Heart left ventricle (tissue), 16 donors: ENCODE measurements at regions of chr6 and their contacts with region 1.

Region 1: DNA sequence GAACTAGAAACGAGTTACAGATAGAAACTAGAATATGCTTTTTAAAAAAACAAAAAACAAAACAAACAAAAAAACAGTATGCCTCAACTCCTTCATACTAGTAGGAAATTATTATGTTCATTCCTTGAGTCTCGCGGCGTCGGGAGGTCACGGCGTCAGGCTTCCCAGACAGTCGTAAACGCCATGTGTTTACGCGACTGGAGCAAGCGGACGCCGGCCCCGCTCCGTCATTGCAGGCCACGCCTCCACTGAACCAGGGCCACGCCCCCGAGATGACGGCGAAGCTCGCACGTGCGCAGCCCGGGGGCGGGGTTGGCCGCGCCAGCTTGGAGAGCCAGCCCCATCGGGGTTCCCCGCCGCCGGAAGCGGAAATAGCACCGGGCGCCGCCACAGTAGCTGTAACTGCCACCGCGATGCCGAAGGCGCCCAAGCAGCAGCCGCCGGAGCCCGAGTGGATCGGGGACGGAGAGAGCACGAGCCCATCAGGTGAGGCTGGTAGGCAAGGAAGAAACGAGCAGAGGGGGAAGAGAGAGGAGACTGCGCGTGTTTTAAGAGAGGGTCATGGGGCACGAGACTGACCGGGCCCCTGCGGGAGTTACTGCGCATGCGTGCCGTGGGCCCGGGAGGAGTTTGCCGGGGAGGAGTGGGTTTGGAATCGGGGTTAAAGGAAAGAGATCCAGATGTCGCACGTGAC is at the start of gene ABCF1:
- DNase-seq: peak; percentile 98 to 100 (median 98)
- ATAC-seq: peak; percentile 98 to 99 (median 99)
- H3K4me3 ChIP-seq: peak within 1 kb of the TSS; percentile 43 to 95 (median 73)
- H3K27ac ChIP-seq: peak within 1 kb of the TSS; percentile 59 to 97 (median 88)
- H3K4me1 ChIP-seq: peaks cover 0 to 40% (median 28%) of the 10 kb centered on the region in 12 donors
- H3K27me3 ChIP-seq: no peaks in the 10 kb centered on the region
- CTCF ChIP-seq: peak in 1 of 12 donors; percentile 19
- POLR2A ChIP-seq: peak in 1 of 2 donors; percentile 83
- total RNA-seq, gene ABCF1: 35.1 to 49.0 (median 39.8) TPM

Region 2: GRCh38 chr6:30357678-30358540 is 213.3 kb before region 1 on chr6:
- intact Hi-C with region 1: no loop called
- DNase-seq: peak in 2 of 5 donors; percentile 20 to 27
- ATAC-seq: peak in 3 of 4 donors; percentile 32 to 72 (median 52)
- H3K4me3 ChIP-seq: peak overlapping the region in 10 of 12 donors; percentile 1 to 40 (median 30)
- H3K27ac ChIP-seq: peak overlapping the region in 1 of 12 donors; percentile 81
- H3K4me1 ChIP-seq: peaks cover 0 to 8% (median 0%) of the 10 kb centered on the region in 12 donors
- H3K27me3 ChIP-seq: peaks cover 9 to 80% (median 36%) of the 10 kb centered on the region in 9 donors
- CTCF ChIP-seq: peak; percentile 43 to 81 (median 68)
- POLR2A ChIP-seq: no peak

Region 3: GRCh38 chr6:30378290-30378937 is 192.8 kb before region 1 on chr6:
- intact Hi-C with region 1: no loop called
- DNase-seq: no peak
- ATAC-seq: no peak
- H3K4me3 ChIP-seq: no peak overlapping the region
- H3K27ac ChIP-seq: no peak overlapping the region
- H3K4me1 ChIP-seq: no peaks in the 10 kb centered on the region
- H3K27me3 ChIP-seq: peaks cover 0 to 38% (median 7%) of the 10 kb centered on the region in 9 donors
- CTCF ChIP-seq: no peak
- POLR2A ChIP-seq: no peak

Region 4: GRCh38 chr6:30515932-30516753 is 55.1 kb before region 1 on chr6:
- intact Hi-C with region 1: no loop called
- DNase-seq: peak; percentile 90 to 93 (median 91)
- ATAC-seq: peak; percentile 93 to 97 (median 97)
- H3K4me3 ChIP-seq: peak overlapping the region; percentile 6 to 59 (median 50)
- H3K27ac ChIP-seq: peak overlapping the region; percentile 83 to 99 (median 92)
- H3K4me1 ChIP-seq: peaks cover 0 to 29% (median 9%) of the 10 kb centered on the region in 12 donors
- H3K27me3 ChIP-seq: no peaks in the 10 kb centered on the region
- CTCF ChIP-seq: peak in 1 of 12 donors; percentile 5
- POLR2A ChIP-seq: peak in 1 of 2 donors; percentile 61

Region 5: DNA sequence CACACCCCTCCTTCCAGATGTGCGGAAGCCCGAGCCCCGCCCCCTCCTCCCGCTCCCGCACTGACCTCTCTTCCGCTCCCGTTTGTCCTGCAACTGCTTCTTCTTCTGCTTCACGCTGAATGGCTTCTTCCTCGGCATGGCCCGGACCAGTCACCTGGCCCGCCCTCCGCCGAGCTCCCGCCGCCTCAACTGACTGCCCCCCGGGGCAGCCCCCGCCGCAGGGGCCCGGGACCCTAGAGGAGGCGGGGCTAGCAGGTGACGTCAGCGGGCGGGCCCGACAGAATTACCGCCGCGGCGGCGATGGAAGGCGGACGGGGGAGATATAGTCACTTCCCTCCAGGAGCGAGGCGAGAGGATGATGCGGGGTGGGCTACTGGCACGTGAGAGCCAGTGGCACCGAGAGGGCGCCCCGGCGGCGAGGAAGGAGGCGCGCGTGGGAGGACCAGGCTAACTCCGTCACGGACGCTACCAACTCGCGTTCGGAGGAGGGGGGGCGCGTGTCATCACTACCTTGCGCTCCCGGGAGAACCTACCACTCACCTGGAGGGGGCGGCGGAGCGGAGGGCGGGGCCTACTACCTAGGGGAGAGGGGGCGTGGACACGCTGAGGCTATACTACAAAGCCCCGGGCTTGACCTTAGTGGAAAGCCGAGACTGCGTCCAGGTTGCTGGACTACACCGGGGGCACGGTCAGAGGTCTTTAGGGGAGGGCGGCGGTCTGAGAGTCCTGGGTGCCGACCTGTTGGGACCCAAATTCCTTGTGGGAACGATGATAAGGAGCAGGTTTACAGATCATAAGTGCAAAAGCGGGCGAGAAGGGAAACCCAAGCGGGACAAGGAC is 14.9 kb before region 1 on chr6 and contains the start of gene GNL1:
- intact Hi-C with region 1: loop called in 3 of 10 experiments (anchors 1 to 2 kb)
- DNase-seq: peak; percentile 93 to 96 (median 93)
- ATAC-seq: peak; percentile 78 to 87 (median 82)
- H3K4me3 ChIP-seq: peak within 1 kb of the TSS; percentile 73 to 99 (median 90)
- H3K27ac ChIP-seq: peak within 1 kb of the TSS; percentile 95 to 99 (median 98)
- H3K4me1 ChIP-seq: peaks cover 0 to 30% (median 17%) of the 10 kb centered on the region in 12 donors
- H3K27me3 ChIP-seq: no peaks in the 10 kb centered on the region
- CTCF ChIP-seq: peak in 1 of 12 donors; percentile 3
- POLR2A ChIP-seq: peak in 1 of 2 donors; percentile 42
- total RNA-seq, gene GNL1: 9.1 to 32.4 (median 17.4) TPM

Region 6: DNA sequence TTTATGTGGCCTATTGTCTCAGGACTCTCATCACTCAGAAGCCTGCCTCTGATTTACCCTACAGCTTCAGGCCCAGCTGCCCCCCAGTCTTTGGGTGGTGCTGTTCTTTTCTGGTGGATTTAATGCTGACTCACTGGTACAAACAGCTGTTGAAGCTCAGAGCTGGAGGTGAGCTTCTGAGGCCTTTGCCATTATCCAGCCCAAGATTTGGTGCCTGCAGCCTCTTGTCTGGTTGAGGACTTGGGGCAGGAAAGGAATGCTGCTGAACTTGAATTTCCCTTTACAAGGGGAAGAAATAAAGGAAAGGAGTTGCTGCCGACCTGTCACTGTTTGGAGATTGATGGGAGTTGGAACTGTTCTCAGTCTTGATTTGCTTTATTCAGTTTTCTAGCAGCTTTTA is 19.8 kb after region 1 on chr6:
- intact Hi-C with region 1: loop called in 1 of 10 experiments (anchors 2 kb)
- DNase-seq: no peak
- ATAC-seq: peak in 1 of 4 donors; percentile 25
- H3K4me3 ChIP-seq: no peak overlapping the region
- H3K27ac ChIP-seq: peak overlapping the region in 2 of 12 donors; percentile 25 to 36
- H3K4me1 ChIP-seq: no peaks in the 10 kb centered on the region
- H3K27me3 ChIP-seq: no peaks in the 10 kb centered on the region
- CTCF ChIP-seq: no peak
- POLR2A ChIP-seq: no peak

Region 7: DNA sequence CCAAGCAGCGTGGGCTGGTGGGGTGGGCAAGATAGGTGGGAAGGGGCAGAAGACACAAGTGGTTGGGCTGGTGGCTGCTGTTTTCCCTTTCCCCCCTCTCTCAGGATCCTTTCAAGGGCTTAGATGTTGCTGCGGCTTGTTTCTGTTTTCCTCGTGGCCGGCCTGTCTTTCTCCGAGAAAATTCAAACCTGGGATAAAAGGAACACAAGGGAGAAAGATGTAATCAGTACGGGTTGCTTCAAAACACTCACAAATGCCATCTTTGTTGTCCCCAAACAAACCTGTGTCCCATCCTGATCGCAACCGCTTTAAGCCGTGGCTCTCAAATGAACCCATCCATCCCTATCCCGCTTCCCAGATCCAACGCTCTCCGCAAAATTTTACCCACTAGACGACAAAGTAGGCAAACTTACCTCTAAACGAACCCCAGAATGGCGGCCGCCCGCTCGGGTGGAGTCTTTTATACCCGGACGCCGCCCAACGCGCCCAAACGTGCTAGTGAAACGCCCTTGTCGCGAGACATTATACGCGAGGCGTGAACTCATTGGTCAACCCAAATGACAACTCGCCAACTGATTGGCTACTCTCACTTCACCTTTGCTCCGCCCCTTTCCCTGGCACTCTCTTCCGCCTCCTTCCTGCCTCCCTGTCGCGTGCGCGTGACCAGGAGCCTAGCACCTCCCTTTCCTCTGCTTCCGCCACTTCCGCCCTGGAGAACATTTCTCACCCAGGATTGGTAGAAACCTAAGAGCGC is 45.8 kb after region 1 on chr6 and contains the start of gene PPP1R10:
- intact Hi-C with region 1: loop called in 1 of 10 experiments (anchors 2 kb)
- DNase-seq: peak; percentile 97 to 100 (median 100)
- ATAC-seq: peak; percentile 87 to 92 (median 92)
- H3K4me3 ChIP-seq: peak within 1 kb of the TSS; percentile 57 to 92 (median 78)
- H3K27ac ChIP-seq: peak within 1 kb of the TSS; percentile 94 to 99 (median 97)
- H3K4me1 ChIP-seq: peaks cover 0 to 42% (median 37%) of the 10 kb centered on the region in 12 donors
- H3K27me3 ChIP-seq: no peaks in the 10 kb centered on the region
- CTCF ChIP-seq: no peak
- POLR2A ChIP-seq: peak; percentile 99
- total RNA-seq, gene PPP1R10: 21.7 to 44.9 (median 29.9) TPM